ENCODE measurements at regions of chr5 and their contacts with region 1.

Region 1: DNA sequence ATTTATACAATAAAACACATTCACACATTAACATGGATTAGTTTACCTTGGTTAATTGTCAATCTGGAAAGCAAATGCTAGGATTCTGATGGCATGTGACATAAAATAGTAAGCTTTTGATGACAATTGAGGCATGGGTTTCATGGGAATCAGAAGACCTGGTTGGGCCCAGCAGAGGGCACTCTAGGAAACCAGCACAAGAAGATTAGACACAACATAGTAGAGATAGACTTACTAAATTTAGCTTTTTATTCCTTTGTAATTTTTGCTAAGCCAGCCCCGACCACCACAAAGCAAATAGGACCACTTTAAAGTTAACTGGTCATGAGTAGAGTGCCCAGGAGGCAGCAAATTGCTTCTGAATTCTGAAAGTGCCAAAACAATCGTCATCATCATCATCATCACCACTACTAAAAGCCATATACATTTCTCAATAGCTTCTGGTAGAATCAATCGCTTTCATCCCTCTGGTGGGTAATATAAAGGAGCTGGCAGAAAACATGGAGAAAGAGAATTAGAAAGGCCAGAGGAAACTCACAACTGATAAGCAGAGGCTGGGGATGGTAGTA is 163.2 kb downstream of the ARRDC3 start:
- DNase-seq: peak; percentile 50
- H3K4me3 Mint-ChIP-seq: no peak overlapping the region
- H3K27ac Mint-ChIP-seq: no peak overlapping the region
- H3K4me1 Mint-ChIP-seq: no peaks in the 10 kb centered on the region
- H3K27me3 Mint-ChIP-seq: peaks cover 2% of the 10 kb centered on the region

Region 2: DNA sequence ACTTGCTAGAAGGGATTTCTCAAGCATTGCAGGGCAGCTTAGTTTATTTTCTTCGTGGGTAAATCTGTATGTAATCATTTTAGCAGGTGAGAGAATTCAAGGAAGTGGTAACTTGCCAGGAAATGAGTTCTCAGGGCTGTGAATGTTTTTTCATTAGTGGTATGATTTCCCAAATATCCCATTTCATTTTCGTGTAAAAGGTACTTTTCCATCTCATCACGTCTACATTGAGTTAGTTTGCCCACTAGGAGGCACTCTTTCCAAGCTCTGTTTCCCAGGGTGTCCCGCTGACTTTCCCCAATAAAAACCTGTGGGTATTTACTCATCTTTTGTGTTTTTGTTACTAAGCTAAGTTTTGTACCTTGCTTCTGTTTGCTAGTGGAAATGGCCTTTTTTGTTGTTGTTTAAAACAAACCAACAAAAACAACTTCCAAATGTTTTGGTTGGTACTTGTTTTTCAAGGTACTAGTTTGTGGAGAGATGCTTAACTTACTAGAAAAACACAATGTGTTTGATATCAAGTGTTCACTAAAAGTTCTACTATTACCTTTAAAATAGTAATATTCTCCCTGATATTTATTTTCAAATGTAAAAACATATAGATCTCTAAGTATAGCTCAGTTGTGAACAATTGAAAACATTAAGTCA is 287.7 kb before region 1 on chr5:
- CTCF ChIA-PET with region 1: interaction called, 7 read pairs
- POLR2A ChIA-PET with region 1: no interaction called
- intact Hi-C with region 1: loop called (anchors 5 kb)
- DNase-seq: peak; percentile 37
- H3K4me3 Mint-ChIP-seq: no peak overlapping the region
- H3K27ac Mint-ChIP-seq: no peak overlapping the region
- H3K4me1 Mint-ChIP-seq: no peaks in the 10 kb centered on the region
- H3K27me3 Mint-ChIP-seq: peaks cover 10% of the 10 kb centered on the region